ENCODE measurements at regions of chr7 and their contacts with region 1.

Region 1: GRCh38 chr7:127304087-127304486 is 51.3 kb upstream of the GRM8 start:
- H3K4me3 ChIP-seq: no peak overlapping the region
- H3K27ac ChIP-seq: no peak overlapping the region
- H3K4me1 ChIP-seq: no peaks in the 10 kb centered on the region
- CTCF ChIP-seq: no peak

Region 2: GRCh38 chr7:127322351-127322750 is 18.3 kb after region 1 on chr7:
- CTCF ChIA-PET with region 1: interaction called, 10 read pairs
- POLR2A ChIA-PET with region 1: no interaction called
- H3K4me3 ChIP-seq: no peak overlapping the region
- H3K27ac ChIP-seq: no peak overlapping the region
- H3K4me1 ChIP-seq: no peaks in the 10 kb centered on the region
- CTCF ChIP-seq: no peak

Measured in HEK293 (cell line).